GM23248 (cell line): ENCODE measurements at regions of chr7 and their contacts with region 1.

Region 1: GRCh38 chr7:137169282-137169698 is 174.2 kb downstream of the PTN start:
- DNase-seq: peak; percentile 73
- H3K4me3 ChIP-seq: no peak overlapping the region
- H3K27ac ChIP-seq: no peak overlapping the region
- H3K4me1 ChIP-seq: no peaks in the 10 kb centered on the region; the same call in 1 of the 2 replicates
- H3K27me3 ChIP-seq: no peaks in the 10 kb centered on the region

Region 2: DNA sequence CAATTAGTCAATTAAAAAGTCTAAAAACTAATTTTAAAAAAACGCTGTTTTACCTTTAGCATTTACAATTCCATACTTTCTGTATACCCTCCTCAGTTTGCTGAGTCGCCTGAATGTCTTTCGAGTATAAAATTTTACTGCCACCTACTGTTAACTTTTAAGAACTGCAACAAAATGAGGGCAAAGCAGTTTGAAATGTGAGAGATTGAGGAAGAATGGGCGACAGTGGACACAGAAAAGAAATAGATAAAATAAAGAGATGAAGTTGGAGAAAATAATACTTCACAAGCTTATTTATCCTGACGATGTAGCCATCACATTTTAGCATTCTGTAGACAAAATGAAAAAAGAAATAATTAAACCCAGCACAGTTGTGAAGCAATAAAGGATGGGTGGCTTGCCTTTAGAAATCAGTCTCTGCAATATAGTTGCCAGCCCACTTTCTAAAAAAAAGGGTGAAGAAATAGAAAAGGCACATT is 285.0 kb after region 1 on chr7:
- in situ Hi-C with region 1: loop called (anchors 10 kb)
- DNase-seq: peak; percentile 67
- H3K4me3 ChIP-seq: peak overlapping the region; percentile 28
- H3K27ac ChIP-seq: peak overlapping the region; percentile 61
- H3K4me1 ChIP-seq: peaks cover 22% of the 10 kb centered on the region
- H3K27me3 ChIP-seq: no peaks in the 10 kb centered on the region

Region 3: GRCh38 chr7:137579913-137580640 is 410.8 kb after region 1 on chr7:
- in situ Hi-C with region 1: loop called (anchors 10 kb)
- DNase-seq: peak; percentile 89
- H3K4me3 ChIP-seq: 0 out of 2 replicates have a peak overlapping the region, but pooled peaks have one; percentile 16
- H3K27ac ChIP-seq: peak overlapping the region; percentile 57
- H3K4me1 ChIP-seq: peaks cover 33% of the 10 kb centered on the region
- H3K27me3 ChIP-seq: no peaks in the 10 kb centered on the region